Mammary epithelial cell (primary cell): ENCODE measurements at regions of chr21 and their contacts with region 1.

Region 1: DNA sequence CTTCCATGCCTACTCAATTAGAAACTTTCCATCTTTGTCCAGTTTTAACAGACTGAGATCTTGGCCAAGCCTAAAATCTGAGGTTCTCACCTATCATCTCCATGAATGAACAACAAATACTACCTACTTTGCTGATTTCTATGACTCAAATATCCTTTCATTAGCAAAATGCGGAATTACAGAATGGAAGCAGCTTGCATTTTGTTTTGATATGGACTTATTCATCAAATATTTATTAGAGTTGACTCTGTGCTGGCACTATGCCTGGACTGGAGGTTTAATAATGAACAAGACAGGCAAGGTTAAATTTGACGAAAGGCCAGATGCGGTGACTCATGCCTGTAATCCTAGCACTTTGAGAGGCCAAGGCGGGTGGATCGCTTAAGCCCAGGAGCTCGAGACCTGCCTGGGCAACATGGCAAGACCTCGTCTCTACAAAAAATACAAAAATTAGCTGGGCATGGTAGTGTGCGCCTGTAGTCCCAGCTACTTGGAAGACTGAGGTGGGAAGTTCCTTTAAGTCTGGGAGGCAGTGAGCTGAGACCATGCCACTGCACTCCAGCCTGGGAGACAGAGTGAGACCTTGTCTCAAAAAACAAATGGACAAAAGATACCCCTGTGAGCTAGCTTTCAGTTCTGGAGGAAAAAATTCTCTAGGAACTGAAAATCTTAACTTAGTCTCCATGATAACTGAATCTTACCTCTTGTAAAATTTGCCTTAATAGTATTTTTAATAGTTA is 29.4 kb upstream of the SOD1 start:
- DNase-seq: peak; percentile 98
- H3K4me3 ChIP-seq: no peak overlapping the region
- H3K27ac ChIP-seq: peak overlapping the region; percentile 16
- H3K4me1 ChIP-seq: peaks cover 24% of the 10 kb centered on the region
- H3K27me3 ChIP-seq: no peaks in the 10 kb centered on the region
- CTCF ChIP-seq: no peak

Region 2: DNA sequence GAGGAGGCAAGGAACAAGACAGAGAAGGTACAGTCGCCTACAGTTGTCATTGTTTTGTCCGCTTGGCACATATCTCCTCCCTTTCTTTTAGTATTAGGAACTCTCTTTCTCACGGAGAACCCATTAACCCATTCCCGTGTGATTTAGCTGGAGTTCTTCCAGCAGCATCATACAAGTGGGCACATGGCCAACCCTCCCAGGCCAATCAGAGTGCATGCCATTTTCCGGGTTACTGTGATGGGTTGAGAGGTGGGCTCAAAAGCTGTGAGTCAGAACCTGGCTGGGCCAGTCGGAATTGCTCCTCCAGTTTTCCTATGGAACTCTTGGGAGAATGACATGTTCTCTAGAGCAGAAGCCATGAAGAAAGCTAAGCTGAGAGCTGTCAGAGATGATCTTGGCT is 53.7 kb before region 1 on chr21:
- CTCF ChIA-PET with region 1: no interaction called
- dilution Hi-C with region 1: no loop called
- in situ Hi-C with region 1: no loop called
- intact Hi-C with region 1: no loop called
- DNase-seq: no peak
- H3K4me3 ChIP-seq: no peak overlapping the region
- H3K27ac ChIP-seq: no peak overlapping the region
- H3K4me1 ChIP-seq: no peaks in the 10 kb centered on the region
- H3K27me3 ChIP-seq: no peaks in the 10 kb centered on the region
- CTCF ChIP-seq: no peak

Region 3: GRCh38 chr21:32278518-32279376 is 648.6 kb after region 1 on chr21 and contains the start of gene MIS18A:
- CTCF ChIA-PET with region 1: no interaction called
- dilution Hi-C with region 1: no loop called
- in situ Hi-C with region 1: no loop called
- intact Hi-C with region 1: loop called (anchors 5 kb)
- DNase-seq: peak; percentile 98
- H3K4me3 ChIP-seq: peak within 1 kb of the TSS; percentile 94 to 98 (median 94)
- H3K27ac ChIP-seq: peak within 1 kb of the TSS; percentile 74
- H3K4me1 ChIP-seq: peaks cover 16% of the 10 kb centered on the region
- H3K27me3 ChIP-seq: no peaks in the 10 kb centered on the region
- CTCF ChIP-seq: no peak
- total RNA-seq, gene MIS18A: 4.3 to 14.8 TPM

Region 4: DNA sequence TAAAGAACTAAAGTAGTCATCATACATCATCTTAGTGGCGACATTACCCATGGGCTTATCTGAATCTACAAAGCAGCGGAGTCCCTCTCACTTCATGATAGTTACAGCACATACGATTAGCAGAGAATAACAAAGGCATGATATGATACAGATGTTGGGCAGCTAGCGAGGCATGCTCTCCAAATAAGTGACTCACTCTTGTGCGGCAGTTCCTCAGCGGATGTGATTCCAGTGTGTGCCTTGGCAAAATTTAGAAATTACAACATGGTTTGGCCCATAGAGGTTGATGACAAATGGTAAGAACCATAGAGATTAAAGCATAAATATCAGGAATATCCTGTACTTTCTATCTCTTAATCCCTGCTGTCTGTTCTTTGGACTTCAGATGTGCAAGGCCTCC is 1189.6 kb after region 1 on chr21:
- CTCF ChIA-PET with region 1: no interaction called
- dilution Hi-C with region 1: no loop called
- in situ Hi-C with region 1: no loop called
- intact Hi-C with region 1: no loop called
- DNase-seq: no peak
- H3K4me3 ChIP-seq: no peak overlapping the region
- H3K27ac ChIP-seq: no peak overlapping the region
- H3K4me1 ChIP-seq: no peaks in the 10 kb centered on the region
- H3K27me3 ChIP-seq: no peaks in the 10 kb centered on the region
- CTCF ChIP-seq: no peak